Activated T-helper 1 cell treated with anti-CD3 and anti-CD28 coated beads, Interleukin-12 subunit alpha, Interleukin-12 subunit beta, Interleukin-2, Interleukin-4 antibody, amounts not matched to agents 30 ng/mL and 10 ng/mL and 1 ng/mL, durations not matched to agents 14 hours and 24 hours and 36 hours (primary cell): ENCODE measurements at regions of chr9 and their contacts with region 1.

Region 1: GRCh38 chr9:2655411-2655901 is 33.9 kb downstream of the VLDLR start:
- DNase-seq: peak; percentile 43
- H3K4me3 Mint-ChIP-seq: peak overlapping the region; percentile 15
- H3K27ac Mint-ChIP-seq: peak overlapping the region; percentile 94
- H3K4me1 Mint-ChIP-seq: peaks cover 24% of the 10 kb centered on the region
- H3K27me3 Mint-ChIP-seq: no peaks in the 10 kb centered on the region

Region 2: DNA sequence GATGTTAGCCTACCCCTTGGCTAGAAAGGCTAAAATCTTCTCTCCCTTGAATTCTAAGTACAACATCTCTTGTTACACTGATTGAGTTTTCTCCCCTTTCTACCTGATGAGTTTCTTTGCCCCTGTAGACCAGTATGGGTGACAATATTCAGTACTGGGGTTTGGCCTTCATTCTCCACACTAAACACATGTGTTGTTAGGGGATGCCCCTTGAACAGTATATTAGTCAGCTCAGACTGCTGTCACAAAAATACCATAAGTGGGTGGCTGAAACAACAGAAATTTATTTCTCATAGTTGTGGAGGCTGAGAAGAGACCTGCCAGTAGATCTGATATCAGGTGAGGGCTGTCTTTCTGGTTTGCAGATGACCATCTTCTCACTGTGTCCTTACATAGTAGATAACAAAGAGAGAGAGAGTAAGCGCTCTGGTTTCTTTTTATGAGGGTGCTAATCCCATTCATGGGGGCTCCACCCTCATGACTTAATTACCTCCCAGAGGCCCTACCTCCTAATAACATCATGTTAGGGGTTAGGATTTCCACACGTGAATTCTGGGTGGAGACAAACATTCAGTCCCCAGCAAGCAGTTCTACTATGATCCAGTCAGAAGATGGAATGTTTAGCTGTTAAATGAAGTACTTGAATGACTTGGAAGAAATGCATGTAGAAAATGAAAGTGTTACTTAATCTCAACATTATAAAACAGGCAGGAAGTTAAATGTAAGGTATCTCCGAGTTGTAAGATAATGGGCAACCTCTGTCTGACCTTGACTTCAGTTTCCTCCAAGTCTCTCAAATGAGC is 16.4 kb before region 1 on chr9:
- intact Hi-C with region 1: loop called (anchors 1 kb)
- DNase-seq: no peak
- H3K4me3 Mint-ChIP-seq: no peak overlapping the region
- H3K27ac Mint-ChIP-seq: peak overlapping the region; percentile 56
- H3K4me1 Mint-ChIP-seq: peaks cover 24% of the 10 kb centered on the region
- H3K27me3 Mint-ChIP-seq: no peaks in the 10 kb centered on the region

Region 3: GRCh38 chr9:2764353-2764752 is 108.9 kb after region 1 on chr9:
- intact Hi-C with region 1: loop called (anchors 2 kb)
- DNase-seq: peak; percentile 45
- H3K4me3 Mint-ChIP-seq: peak overlapping the region; percentile 17
- H3K27ac Mint-ChIP-seq: peak overlapping the region; percentile 89
- H3K4me1 Mint-ChIP-seq: peaks cover 39% of the 10 kb centered on the region
- H3K27me3 Mint-ChIP-seq: no peaks in the 10 kb centered on the region

Region 4: GRCh38 chr9:2849941-2850340 is 194.5 kb after region 1 on chr9:
- intact Hi-C with region 1: loop called (anchors 2 kb)
- DNase-seq: no peak
- H3K4me3 Mint-ChIP-seq: no peak overlapping the region
- H3K27ac Mint-ChIP-seq: no peak overlapping the region
- H3K4me1 Mint-ChIP-seq: peaks cover 7% of the 10 kb centered on the region
- H3K27me3 Mint-ChIP-seq: peaks cover under 1% of the 10 kb centered on the region

Region 5: GRCh38 chr9:3337515-3338225 is 682.2 kb after region 1 on chr9:
- intact Hi-C with region 1: loop called (anchors 5 kb)
- DNase-seq: no peak
- H3K4me3 Mint-ChIP-seq: no peak overlapping the region
- H3K27ac Mint-ChIP-seq: peak overlapping the region; percentile 1
- H3K4me1 Mint-ChIP-seq: peaks cover 28% of the 10 kb centered on the region
- H3K27me3 Mint-ChIP-seq: no peaks in the 10 kb centered on the region